ENCODE measurements at regions of chr6 and their contacts with region 1.

Region 1: DNA sequence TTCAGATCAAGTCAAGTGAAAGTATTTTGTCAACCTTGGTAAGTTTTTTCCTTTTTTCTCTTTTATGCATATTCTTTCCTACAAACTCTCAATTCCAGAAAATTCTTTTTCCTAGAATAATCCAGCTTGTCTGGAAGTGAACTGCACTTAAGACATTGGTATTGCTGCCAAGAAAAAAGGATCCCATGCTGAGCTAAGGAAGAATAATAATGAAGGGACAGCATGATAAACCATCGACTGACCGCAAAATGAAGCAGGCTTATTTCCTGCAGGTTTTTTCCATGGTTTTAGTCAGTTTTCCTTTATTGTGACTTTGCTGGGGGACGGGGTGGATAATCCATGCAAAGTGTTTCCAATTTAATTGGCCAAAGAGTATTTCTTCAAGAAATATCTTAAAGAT is 857.6 kb upstream of the SLC35B3 start:
- DNase-seq: no peak
- H3K4me3 ChIP-seq: no peak overlapping the region
- H3K27ac ChIP-seq: no peak overlapping the region
- H3K4me1 ChIP-seq: no peaks in the 10 kb centered on the region
- H3K27me3 ChIP-seq: no peaks in the 10 kb centered on the region
- CTCF ChIP-seq: no peak
- EP300 ChIP-seq: no peak
- POLR2A ChIP-seq: no peak

Region 2: GRCh38 chr6:9334979-9335378 is 42.0 kb after region 1 on chr6:
- intact Hi-C with region 1: no loop called
- DNase-seq: no peak
- H3K4me3 ChIP-seq: no peak overlapping the region
- H3K27ac ChIP-seq: no peak overlapping the region
- H3K4me1 ChIP-seq: no peaks in the 10 kb centered on the region
- H3K27me3 ChIP-seq: no peaks in the 10 kb centered on the region
- CTCF ChIP-seq: no peak
- EP300 ChIP-seq: no peak
- POLR2A ChIP-seq: no peak

Region 3: DNA sequence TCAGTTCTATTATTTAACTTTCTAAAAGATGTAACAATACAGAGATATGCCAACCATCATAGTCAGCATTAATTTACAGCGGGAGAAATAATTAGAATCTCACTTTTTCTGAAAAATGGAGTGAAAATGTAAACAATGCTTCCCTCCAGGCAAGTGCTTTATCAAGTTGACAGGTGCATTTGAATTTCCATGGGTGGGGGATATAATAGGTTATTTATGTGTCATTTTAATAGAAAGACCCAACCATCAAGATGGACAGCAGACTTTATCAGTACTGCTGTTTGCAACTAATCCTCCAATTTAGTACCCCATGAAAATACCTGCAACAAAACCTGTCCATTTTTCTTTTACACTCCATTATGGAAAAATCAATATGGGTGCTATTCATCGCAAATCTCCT is 341.8 kb after region 1 on chr6:
- intact Hi-C with region 1: loop called in 1 of 4 experiments (anchors 5 kb)
- DNase-seq: no peak
- H3K4me3 ChIP-seq: no peak overlapping the region
- H3K27ac ChIP-seq: no peak overlapping the region
- H3K4me1 ChIP-seq: no peaks in the 10 kb centered on the region
- H3K27me3 ChIP-seq: no peaks in the 10 kb centered on the region
- CTCF ChIP-seq: no peak
- EP300 ChIP-seq: no peak
- POLR2A ChIP-seq: no peak

Measured in ovary (tissue), 10 donors.